Activated T-helper 1 cell treated with anti-CD3 and anti-CD28 coated beads, Interleukin-12 subunit alpha, Interleukin-12 subunit beta, Interleukin-2, Interleukin-4 antibody, amounts not matched to agents 30 ng/mL and 10 ng/mL and 1 ng/mL, durations not matched to agents 14 hours and 24 hours and 36 hours (primary cell): ENCODE measurements at regions of chr19 and their contacts with region 1.

Region 1: GRCh38 chr19:38831142-38831605 is 420 bp downstream of the ECH1 start:
- DNase-seq: no peak
- H3K4me3 Mint-ChIP-seq: peak overlapping the region; percentile 89
- H3K27ac Mint-ChIP-seq: peak overlapping the region; percentile 95
- H3K4me1 Mint-ChIP-seq: peaks cover 22% of the 10 kb centered on the region
- H3K27me3 Mint-ChIP-seq: no peaks in the 10 kb centered on the region

Region 2: DNA sequence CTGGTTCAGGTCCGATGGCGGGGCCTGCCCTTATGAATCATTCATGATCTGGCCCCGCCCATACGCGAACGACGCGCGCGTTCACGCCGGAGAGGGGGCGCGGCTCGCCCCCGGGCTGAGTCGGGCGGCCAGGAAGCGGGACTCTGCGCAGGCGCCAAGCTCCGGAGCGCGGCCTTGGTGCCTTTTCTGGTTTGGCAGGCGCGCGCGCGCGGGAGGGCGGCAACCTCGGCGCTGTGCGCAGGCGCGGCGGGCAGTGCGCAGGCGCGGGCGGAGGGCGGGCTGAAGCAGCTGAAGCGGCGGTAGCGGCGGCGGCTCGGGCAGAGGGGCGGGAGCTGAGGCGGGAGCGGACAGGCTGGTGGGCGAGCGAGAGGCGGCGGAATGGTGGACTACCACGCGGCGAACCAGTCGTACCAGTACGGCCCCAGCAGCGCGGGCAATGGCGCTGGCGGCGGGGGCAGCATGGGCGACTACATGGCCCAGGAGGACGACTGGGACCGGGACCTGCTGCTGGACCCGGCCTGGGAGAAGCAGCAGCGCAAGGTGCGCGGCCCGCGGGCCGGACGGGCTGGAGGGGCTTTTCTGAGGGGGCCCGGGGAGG is 183.7 kb before region 1 on chr19 and contains the start of gene ACTN4:
- intact Hi-C with region 1: loop called (anchors 1 kb)
- DNase-seq: peak; percentile 100
- H3K4me3 Mint-ChIP-seq: peak within 1 kb of the TSS; percentile 94
- H3K27ac Mint-ChIP-seq: peak within 1 kb of the TSS; percentile 82
- H3K4me1 Mint-ChIP-seq: peaks cover 38% of the 10 kb centered on the region
- H3K27me3 Mint-ChIP-seq: no peaks in the 10 kb centered on the region
- total RNA-seq, gene ACTN4: 281 and 287 TPM in 2 replicates

Region 3: GRCh38 chr19:38769635-38770211 is 61.5 kb before region 1 on chr19:
- intact Hi-C with region 1: loop called (anchors 2 kb)
- DNase-seq: peak; percentile 87
- H3K4me3 Mint-ChIP-seq: peak overlapping the region; percentile 49
- H3K27ac Mint-ChIP-seq: peak overlapping the region; percentile 40
- H3K4me1 Mint-ChIP-seq: peaks cover 6% of the 10 kb centered on the region
- H3K27me3 Mint-ChIP-seq: peaks cover 2% of the 10 kb centered on the region

Region 4: GRCh38 chr19:38842439-38843174 is 11.4 kb after region 1 on chr19:
- intact Hi-C with region 1: loop called (anchors 1 kb)
- DNase-seq: peak; percentile 64
- H3K4me3 Mint-ChIP-seq: peak overlapping the region; percentile 70
- H3K27ac Mint-ChIP-seq: peak overlapping the region; percentile 93
- H3K4me1 Mint-ChIP-seq: peaks cover 66% of the 10 kb centered on the region
- H3K27me3 Mint-ChIP-seq: no peaks in the 10 kb centered on the region

Region 5: DNA sequence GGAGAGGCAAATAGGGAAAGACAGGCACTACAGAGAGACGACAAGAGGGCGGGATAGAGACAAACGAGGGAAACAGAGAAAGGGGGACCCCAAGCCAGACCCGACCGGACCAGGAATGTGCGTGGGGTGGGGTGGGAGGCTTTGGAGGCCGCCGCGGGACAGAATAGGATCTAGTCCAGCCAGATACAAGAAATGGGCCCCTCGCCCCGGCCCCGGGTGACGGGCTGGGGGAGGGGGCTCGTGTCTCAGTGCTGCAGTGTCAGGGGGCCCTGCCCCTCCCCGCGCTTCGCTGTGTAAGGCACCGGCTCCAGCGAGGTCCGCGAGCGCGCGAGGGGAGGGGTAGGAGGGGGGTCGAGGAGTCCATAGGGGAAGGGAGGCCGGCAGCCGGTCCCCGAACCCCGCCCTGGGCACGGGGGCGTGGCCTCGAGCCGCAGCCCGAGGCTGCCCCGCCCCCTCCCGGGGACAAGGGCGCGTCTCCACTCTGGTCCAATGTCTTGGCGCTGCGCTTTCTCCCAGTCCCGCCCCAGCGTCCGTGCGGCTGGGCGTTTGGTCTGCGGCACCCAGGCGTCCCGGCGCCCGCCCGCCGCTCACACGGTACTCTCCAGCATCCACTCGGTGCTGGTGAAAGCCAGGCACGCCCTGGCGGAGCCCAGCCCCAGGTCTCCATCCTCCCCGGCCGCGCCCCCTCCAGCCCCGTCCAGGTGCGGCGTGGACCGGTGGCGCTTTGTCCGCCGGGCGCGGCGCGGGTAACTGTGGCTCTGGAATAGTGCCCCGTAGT is 476.1 kb after region 1 on chr19:
- intact Hi-C with region 1: no loop called
- DNase-seq: no peak
- H3K4me3 Mint-ChIP-seq: no peak overlapping the region
- H3K27ac Mint-ChIP-seq: no peak overlapping the region
- H3K4me1 Mint-ChIP-seq: peaks cover 17% of the 10 kb centered on the region
- H3K27me3 Mint-ChIP-seq: no peaks in the 10 kb centered on the region